SK-N-SH (cell line): ENCODE measurements at regions of chr17 and their contacts with region 1.

Region 1: GRCh38 chr17:46212634-46213435 is 19.6 kb upstream of the KANSL1 start:
- DNase-seq: peak; percentile 77
- H3K4me3 ChIP-seq: peak overlapping the region in 1 of 2 experiments; percentile 16; a peak in 1 of 4 replicates
- H3K27ac ChIP-seq: no peak overlapping the region
- H3K4me1 ChIP-seq: no peaks in the 10 kb centered on the region
- H3K27me3 ChIP-seq: no peaks in the 10 kb centered on the region
- CTCF ChIP-seq: peak; percentile 98
- EP300 ChIP-seq: no peak
- RAD21 ChIP-seq: peak; percentile 83

Region 2: DNA sequence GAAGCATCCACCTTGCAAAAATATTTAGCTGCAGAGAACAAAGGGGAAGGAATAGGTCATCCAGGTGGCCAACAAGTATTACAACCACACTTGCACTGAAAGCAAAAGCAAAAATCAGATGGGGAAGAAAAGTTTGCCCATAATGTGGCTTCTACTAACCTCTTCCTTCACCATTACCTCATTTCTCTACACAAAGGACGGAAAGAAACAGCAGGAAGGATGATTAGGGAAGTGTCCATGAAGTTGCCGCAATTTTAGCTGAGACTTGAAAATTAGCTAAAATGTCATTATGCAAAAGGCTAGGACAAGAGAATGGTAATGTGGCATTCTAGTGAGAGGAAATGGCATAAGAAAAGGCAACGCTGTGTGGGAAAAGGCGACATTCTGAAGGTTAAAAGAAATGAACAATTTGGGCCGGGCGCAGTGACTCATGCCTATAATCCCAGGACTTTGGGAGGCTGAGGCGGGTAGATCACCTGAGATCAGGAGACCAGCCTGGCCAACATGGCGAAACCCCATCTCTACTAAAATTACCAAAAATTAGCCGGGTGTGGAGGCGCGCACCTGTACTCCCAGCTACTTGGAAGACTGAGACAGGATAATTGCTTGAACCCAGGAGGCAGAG is 33.3 kb before region 1 on chr17:
- CTCF ChIA-PET with region 1: no interaction called
- POLR2A ChIA-PET with region 1: no interaction called
- DNase-seq: no peak
- H3K4me3 ChIP-seq: no peak overlapping the region
- H3K27ac ChIP-seq: no peak overlapping the region
- H3K4me1 ChIP-seq: peaks cover 1 to 14% of the 10 kb centered on the region in 2 experiments
- H3K27me3 ChIP-seq: no peaks in the 10 kb centered on the region
- CTCF ChIP-seq: no peak
- EP300 ChIP-seq: no peak
- RAD21 ChIP-seq: no peak

Region 3: DNA sequence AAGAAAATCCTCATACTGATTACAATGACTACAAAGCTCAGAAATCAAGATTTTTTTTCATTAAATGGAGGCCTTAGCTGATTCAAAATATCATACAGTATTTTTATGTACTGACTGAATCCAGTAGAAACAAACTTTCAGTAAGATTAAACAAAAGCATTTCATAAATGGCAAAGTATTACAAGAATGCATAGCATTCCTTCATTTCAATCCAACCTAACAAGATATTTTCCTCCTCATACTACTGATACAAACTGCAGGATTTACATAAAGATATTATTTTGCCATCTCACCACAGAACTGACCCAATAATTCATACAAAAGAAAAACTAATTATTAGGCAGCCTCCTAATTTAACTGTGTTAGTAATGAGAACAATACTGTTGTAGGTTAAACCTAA is 13.5 kb before region 1 on chr17:
- CTCF ChIA-PET with region 1: interaction called, 49 read pairs
- POLR2A ChIA-PET with region 1: no interaction called
- DNase-seq: no peak
- H3K4me3 ChIP-seq: no peak overlapping the region
- H3K27ac ChIP-seq: peak overlapping the region; percentile 26 to 31; a peak in 3 of 4 replicates
- H3K4me1 ChIP-seq: peaks cover 5 to 15% of the 10 kb centered on the region in 2 experiments
- H3K27me3 ChIP-seq: no peaks in the 10 kb centered on the region
- CTCF ChIP-seq: no peak
- EP300 ChIP-seq: no peak
- RAD21 ChIP-seq: no peak